H1 (cell line): ENCODE measurements at regions of chr6 and their contacts with region 1.

Region 1: DNA sequence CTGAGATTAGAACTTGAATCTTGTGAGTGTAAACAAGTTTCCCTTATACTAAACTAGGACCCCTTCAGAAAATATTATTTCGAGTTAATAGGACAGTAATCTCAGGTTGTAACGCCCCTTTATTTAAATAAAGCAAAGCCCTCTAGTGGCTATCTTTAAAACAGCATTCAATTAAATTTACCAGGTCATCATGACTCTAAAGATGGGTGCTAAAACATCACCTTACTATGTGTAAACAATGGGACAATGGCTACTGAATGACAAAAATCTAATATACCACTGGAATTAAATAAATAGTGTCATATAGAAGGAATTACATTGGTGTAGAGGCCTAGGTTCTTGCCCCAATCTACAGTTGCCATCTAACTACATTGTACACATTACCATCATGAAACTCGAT is 255.4 kb upstream of the IRAK1BP1 start:
- DNase-seq: no peak
- H3K4me3 ChIP-seq: no peak overlapping the region
- H3K27ac ChIP-seq: no peak overlapping the region
- H3K4me1 ChIP-seq: peaks cover 0 to 4% (median 0%) of the 10 kb centered on the region in 4 experiments; a peak in 1 of 7 replicates
- H3K27me3 ChIP-seq: peaks cover 0 to under 1% (median 0%) of the 10 kb centered on the region in 4 experiments; a peak in 1 of 7 replicates
- CTCF ChIP-seq: peak in 2 of 3 experiments; percentile 14 to 37; a peak in 2 of 4 replicates
- EP300 ChIP-seq: no peak
- POLR2A ChIP-seq: no peak
- RAD21 ChIP-seq: peak in 1 of 2 experiments; percentile 15; a peak in 1 of 4 replicates

Region 2: GRCh38 chr6:78598966-78599365 is 13.0 kb before region 1 on chr6:
- CTCF ChIA-PET with region 1: interaction called, 11 read pairs
- POLR2A ChIA-PET with region 1: no interaction called
- DNase-seq: peak in 1 of 2 experiments; percentile 5
- H3K4me3 ChIP-seq: no peak overlapping the region
- H3K27ac ChIP-seq: no peak overlapping the region
- H3K4me1 ChIP-seq: no peaks in the 10 kb centered on the region
- H3K27me3 ChIP-seq: no peaks in the 10 kb centered on the region
- CTCF ChIP-seq: no peak
- EP300 ChIP-seq: no peak
- POLR2A ChIP-seq: no peak
- RAD21 ChIP-seq: no peak

Region 3: DNA sequence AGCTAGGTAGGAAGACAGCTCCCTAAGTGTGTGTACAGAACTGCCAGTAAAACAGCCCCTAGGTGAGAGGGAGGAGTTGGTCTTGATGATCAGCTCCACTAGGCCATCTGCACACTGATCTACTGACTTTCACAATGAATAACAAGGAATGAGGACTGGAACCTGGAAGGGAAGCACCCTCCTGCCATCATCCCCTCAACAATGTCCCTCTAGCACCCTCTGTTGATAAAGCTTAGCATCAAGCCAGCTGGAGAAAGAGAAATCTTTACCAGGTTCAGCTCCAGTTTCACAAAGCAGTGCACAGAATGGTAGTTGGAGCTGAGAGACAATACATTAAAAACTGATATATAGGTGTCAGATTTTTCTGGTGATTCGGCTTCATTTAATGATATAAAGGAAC is 198.2 kb after region 1 on chr6:
- CTCF ChIA-PET with region 1: interaction called, 14 read pairs
- POLR2A ChIA-PET with region 1: no interaction called
- DNase-seq: no peak
- H3K4me3 ChIP-seq: no peak overlapping the region
- H3K27ac ChIP-seq: no peak overlapping the region
- H3K4me1 ChIP-seq: no peaks in the 10 kb centered on the region
- H3K27me3 ChIP-seq: no peaks in the 10 kb centered on the region
- CTCF ChIP-seq: peak; percentile 38 to 88 (median 73)
- EP300 ChIP-seq: no peak
- POLR2A ChIP-seq: no peak
- RAD21 ChIP-seq: peak; percentile 94 to 95